ENCODE measurements at regions of chr12 and their contacts with region 1.

Region 1: GRCh38 chr12:60494244-60494643 is 898.4 kb downstream of the SLC16A7 start:
- DNase-seq: peak; percentile 37
- H3K4me3 ChIP-seq: no peak overlapping the region
- H3K27ac ChIP-seq: no peak overlapping the region
- H3K4me1 ChIP-seq: no peaks in the 10 kb centered on the region
- H3K27me3 ChIP-seq: no peaks in the 10 kb centered on the region
- CTCF ChIP-seq: peak; percentile 70

Region 2: GRCh38 chr12:59444932-59445331 is 1049.3 kb before region 1 on chr12:
- CTCF ChIA-PET with region 1: no interaction called
- dilution Hi-C with region 1: no loop called
- in situ Hi-C with region 1: loop called in 1 of 2 experiments (anchors 25 kb)
- intact Hi-C with region 1: loop called (anchors 5 kb)
- DNase-seq: peak; percentile 8
- H3K4me3 ChIP-seq: no peak overlapping the region
- H3K27ac ChIP-seq: no peak overlapping the region
- H3K4me1 ChIP-seq: no peaks in the 10 kb centered on the region
- H3K27me3 ChIP-seq: no peaks in the 10 kb centered on the region
- CTCF ChIP-seq: peak; percentile 6 to 48

Region 3: GRCh38 chr12:59834659-59835474 is 659.4 kb before region 1 on chr12:
- CTCF ChIA-PET with region 1: no interaction called
- dilution Hi-C with region 1: no loop called
- in situ Hi-C with region 1: loop called in 1 of 2 experiments (anchors 25 kb)
- intact Hi-C with region 1: no loop called
- DNase-seq: no peak
- H3K4me3 ChIP-seq: no peak overlapping the region
- H3K27ac ChIP-seq: no peak overlapping the region
- H3K4me1 ChIP-seq: no peaks in the 10 kb centered on the region
- H3K27me3 ChIP-seq: no peaks in the 10 kb centered on the region
- CTCF ChIP-seq: peak; percentile 40 to 47

Region 4: GRCh38 chr12:60257063-60257462 is 237.2 kb before region 1 on chr12:
- CTCF ChIA-PET with region 1: interaction called, 12 read pairs
- dilution Hi-C with region 1: no loop called
- in situ Hi-C with region 1: no loop called
- intact Hi-C with region 1: loop called (anchors 1 kb)
- DNase-seq: peak; percentile 43
- H3K4me3 ChIP-seq: no peak overlapping the region
- H3K27ac ChIP-seq: no peak overlapping the region
- H3K4me1 ChIP-seq: no peaks in the 10 kb centered on the region
- H3K27me3 ChIP-seq: no peaks in the 10 kb centered on the region
- CTCF ChIP-seq: peak; percentile 21 to 30

Region 5: GRCh38 chr12:60704171-60704930 is 210.1 kb after region 1 on chr12:
- CTCF ChIA-PET with region 1: no interaction called
- dilution Hi-C with region 1: no loop called
- in situ Hi-C with region 1: no loop called
- intact Hi-C with region 1: no loop called
- DNase-seq: no peak
- H3K4me3 ChIP-seq: no peak overlapping the region
- H3K27ac ChIP-seq: no peak overlapping the region
- H3K4me1 ChIP-seq: no peaks in the 10 kb centered on the region
- H3K27me3 ChIP-seq: no peaks in the 10 kb centered on the region
- CTCF ChIP-seq: no peak

Measured in mammary epithelial cell (primary cell).